ENCODE measurements at regions of chr14 and their contacts with region 1.

Region 1: GRCh38 chr14:22598099-22598899 is at the start of gene ABHD4:
- DNase-seq: peak; percentile 84
- H3K4me3 Mint-ChIP-seq: peak within 1 kb of the TSS; percentile 88
- H3K27ac Mint-ChIP-seq: peak within 1 kb of the TSS; percentile 85
- H3K4me1 Mint-ChIP-seq: peaks cover 33% of the 10 kb centered on the region
- H3K27me3 Mint-ChIP-seq: peaks cover 31% of the 10 kb centered on the region

Region 2: GRCh38 chr14:22466491-22466890 is 131.8 kb before region 1 on chr14:
- CTCF ChIA-PET with region 1: no interaction called
- DNase-seq: no peak
- H3K4me3 Mint-ChIP-seq: no peak overlapping the region
- H3K27ac Mint-ChIP-seq: peak overlapping the region; percentile 73
- H3K4me1 Mint-ChIP-seq: no peaks in the 10 kb centered on the region
- H3K27me3 Mint-ChIP-seq: no peaks in the 10 kb centered on the region

Region 3: DNA sequence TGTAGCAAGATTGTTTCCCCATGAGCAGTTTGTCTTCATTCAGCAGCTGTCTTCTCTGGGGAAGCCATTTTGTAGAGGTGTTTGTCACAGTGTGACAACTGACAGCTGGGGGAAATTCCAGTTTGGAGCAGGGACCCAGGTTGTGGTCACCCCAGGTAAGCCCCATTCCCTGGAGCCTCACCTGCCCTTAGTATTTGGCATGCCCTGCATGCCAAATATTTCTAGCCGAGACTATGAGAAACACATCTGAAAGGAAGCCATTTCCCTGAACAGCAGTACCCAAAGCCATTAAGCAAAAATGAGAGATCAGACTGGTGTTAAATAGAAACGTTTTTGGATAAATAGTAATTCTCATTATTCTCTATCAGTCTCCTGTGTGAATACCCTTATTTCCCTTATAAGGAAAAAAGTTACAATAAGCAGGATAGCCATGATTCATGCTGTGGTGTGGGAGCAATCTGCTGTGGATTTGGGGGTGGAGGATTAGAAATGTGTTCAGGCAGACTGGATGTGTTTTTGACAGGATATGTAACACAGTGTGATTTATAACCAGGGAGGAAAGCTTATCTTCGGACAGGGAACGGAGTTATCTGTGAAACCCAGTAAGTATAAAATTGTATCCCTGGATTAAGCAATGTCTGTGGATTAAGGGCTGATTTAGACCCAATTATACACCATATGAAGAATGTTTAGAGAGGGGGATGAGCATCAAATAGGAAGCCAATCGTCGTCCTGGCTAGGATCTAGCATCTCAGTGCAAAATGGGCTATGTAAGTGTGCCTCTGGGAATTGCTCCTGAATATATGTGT is 78.2 kb before region 1 on chr14:
- CTCF ChIA-PET with region 1: no interaction called
- DNase-seq: no peak
- H3K4me3 Mint-ChIP-seq: peak overlapping the region; percentile 80
- H3K27ac Mint-ChIP-seq: peak overlapping the region; percentile 93
- H3K4me1 Mint-ChIP-seq: peaks cover 96% of the 10 kb centered on the region
- H3K27me3 Mint-ChIP-seq: no peaks in the 10 kb centered on the region

Region 4: GRCh38 chr14:22653012-22653621 is 54.8 kb after region 1 on chr14:
- CTCF ChIA-PET with region 1: interaction called, 10 read pairs
- DNase-seq: peak; percentile 70
- H3K4me3 Mint-ChIP-seq: no peak overlapping the region
- H3K27ac Mint-ChIP-seq: no peak overlapping the region
- H3K4me1 Mint-ChIP-seq: no peaks in the 10 kb centered on the region
- H3K27me3 Mint-ChIP-seq: no peaks in the 10 kb centered on the region